ENCODE measurements at regions of chrX and their contacts with region 1.

Region 1: DNA sequence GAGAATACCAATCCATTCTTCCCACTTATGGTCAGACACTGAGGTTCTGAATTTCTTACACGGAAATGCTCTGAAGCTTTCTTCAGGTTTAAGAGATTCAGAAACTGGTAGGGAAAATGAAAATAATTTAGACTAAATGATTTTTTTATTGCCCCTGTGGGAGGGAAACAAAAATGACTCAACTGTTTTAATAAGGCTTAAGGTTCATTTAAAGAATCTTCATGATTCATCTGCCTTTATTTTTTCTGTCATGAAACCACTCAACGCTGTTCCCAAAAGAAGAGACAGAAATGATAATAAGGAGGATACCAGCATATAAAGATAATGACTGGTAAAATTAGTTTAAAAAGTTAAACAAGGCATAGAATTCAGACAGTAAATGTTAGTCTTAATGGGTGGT is 39.3 kb upstream of the FAM47B start:
- DNase-seq: no peak
- H3K4me3 ChIP-seq: no peak overlapping the region
- H3K27ac ChIP-seq: no peak overlapping the region
- H3K4me1 ChIP-seq: no peaks in the 10 kb centered on the region
- H3K27me3 ChIP-seq: no peaks in the 10 kb centered on the region
- CTCF ChIP-seq: no peak
- EP300 ChIP-seq: no peak
- POLR2A ChIP-seq: no peak

Region 2: DNA sequence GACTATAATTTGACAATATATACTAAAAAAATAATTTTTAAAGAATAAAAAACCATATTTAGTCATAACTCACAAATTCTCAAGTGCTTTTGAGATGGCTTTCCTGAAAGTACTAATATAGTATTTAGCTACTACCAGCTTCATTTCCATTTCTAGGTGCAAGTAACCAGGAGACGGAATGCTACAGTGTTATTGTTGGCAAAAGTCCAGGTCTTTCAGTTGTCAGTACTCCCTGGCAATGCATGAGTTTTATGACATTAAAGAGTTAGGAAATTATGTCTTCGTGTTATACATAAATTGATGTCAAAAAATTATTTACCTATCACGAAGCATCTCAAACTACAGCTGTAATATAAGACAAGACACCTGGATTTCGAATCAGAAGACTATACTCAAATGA is 291.3 kb before region 1 on chrX:
- intact Hi-C with region 1: loop called in 1 of 4 experiments (anchors 10 kb)
- DNase-seq: no peak
- H3K4me3 ChIP-seq: no peak overlapping the region
- H3K27ac ChIP-seq: no peak overlapping the region
- H3K4me1 ChIP-seq: no peaks in the 10 kb centered on the region
- H3K27me3 ChIP-seq: no peaks in the 10 kb centered on the region
- CTCF ChIP-seq: no peak
- EP300 ChIP-seq: no peak
- POLR2A ChIP-seq: no peak

Measured in ovary (tissue), 10 donors.